HepG2 (cell line): ENCODE measurements at regions of chr11 and their contacts with region 1.

Region 1: GRCh38 chr11:31487848-31488247 is 21.6 kb downstream of the IMMP1L start:
- DNase-seq: peak; percentile 53
- ATAC-seq: peak; percentile 76
- H3K4me3 ChIP-seq: no peak overlapping the region
- H3K27ac ChIP-seq: no peak overlapping the region
- H3K4me1 ChIP-seq: no peaks in the 10 kb centered on the region
- H3K27me3 ChIP-seq: no peaks in the 10 kb centered on the region
- CTCF ChIP-seq: peak; percentile 49
- EP300 ChIP-seq: no peak
- POLR2A ChIP-seq: no peak
- RAD21 ChIP-seq: no peak

Region 2: DNA sequence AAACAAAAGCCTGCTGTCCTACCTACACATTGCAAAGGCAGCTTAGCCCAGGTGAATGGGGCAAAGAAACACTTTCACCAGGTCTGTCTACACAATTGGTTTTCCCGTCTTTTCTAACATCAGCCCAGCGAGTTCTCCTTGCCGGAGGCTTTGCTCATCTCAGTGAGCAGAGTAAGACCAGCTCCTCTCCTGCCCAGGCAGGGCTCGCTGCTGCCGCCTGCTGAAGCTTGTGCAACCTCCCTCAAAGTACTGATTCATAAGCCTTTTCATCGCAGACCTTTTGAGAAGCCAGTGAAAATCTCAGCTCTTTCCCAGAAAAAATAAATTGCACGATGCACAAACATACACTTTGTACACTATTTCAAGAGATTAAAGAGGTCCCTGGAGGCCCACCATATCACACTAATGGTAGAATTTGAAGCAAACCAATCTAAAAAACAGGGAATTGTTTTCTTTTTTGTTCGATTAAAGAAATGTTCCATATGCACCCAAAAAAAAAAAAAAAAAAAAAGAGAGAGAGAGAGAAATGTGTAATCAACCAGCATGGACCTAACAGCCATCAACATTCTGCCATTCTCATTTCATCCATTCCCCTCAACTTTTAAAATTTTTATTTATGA is 573.6 kb before region 1 on chr11:
- CTCF ChIA-PET with region 1: no interaction called
- POLR2A ChIA-PET with region 1: no interaction called
- in situ Hi-C with region 1: no loop called
- intact Hi-C with region 1: no loop called
- DNase-seq: peak; percentile 16
- ATAC-seq: peak; percentile 97
- H3K4me3 ChIP-seq: no peak overlapping the region
- H3K27ac ChIP-seq: no peak overlapping the region
- H3K4me1 ChIP-seq: no peaks in the 10 kb centered on the region
- H3K27me3 ChIP-seq: no peaks in the 10 kb centered on the region
- CTCF ChIP-seq: peak; percentile 74
- EP300 ChIP-seq: no peak
- POLR2A ChIP-seq: no peak
- RAD21 ChIP-seq: no peak

Region 3: GRCh38 chr11:31826536-31827438 is 338.9 kb after region 1 on chr11:
- CTCF ChIA-PET with region 1: no interaction called
- POLR2A ChIA-PET with region 1: no interaction called
- in situ Hi-C with region 1: loop called (anchors 10 kb)
- intact Hi-C with region 1: no loop called
- DNase-seq: no peak
- ATAC-seq: peak; percentile 41; the same call in 2 of the 3 replicates
- H3K4me3 ChIP-seq: no peak overlapping the region; a peak in 1 of 6 replicates
- H3K27ac ChIP-seq: no peak overlapping the region
- H3K4me1 ChIP-seq: 0 out of 2 replicates have a peak, but pooled peaks cover 8% of the 10 kb centered on the region
- H3K27me3 ChIP-seq: peaks cover 7 to 76% of the 10 kb centered on the region in 2 experiments
- CTCF ChIP-seq: no peak
- EP300 ChIP-seq: no peak
- POLR2A ChIP-seq: no peak
- RAD21 ChIP-seq: no peak

Region 4: DNA sequence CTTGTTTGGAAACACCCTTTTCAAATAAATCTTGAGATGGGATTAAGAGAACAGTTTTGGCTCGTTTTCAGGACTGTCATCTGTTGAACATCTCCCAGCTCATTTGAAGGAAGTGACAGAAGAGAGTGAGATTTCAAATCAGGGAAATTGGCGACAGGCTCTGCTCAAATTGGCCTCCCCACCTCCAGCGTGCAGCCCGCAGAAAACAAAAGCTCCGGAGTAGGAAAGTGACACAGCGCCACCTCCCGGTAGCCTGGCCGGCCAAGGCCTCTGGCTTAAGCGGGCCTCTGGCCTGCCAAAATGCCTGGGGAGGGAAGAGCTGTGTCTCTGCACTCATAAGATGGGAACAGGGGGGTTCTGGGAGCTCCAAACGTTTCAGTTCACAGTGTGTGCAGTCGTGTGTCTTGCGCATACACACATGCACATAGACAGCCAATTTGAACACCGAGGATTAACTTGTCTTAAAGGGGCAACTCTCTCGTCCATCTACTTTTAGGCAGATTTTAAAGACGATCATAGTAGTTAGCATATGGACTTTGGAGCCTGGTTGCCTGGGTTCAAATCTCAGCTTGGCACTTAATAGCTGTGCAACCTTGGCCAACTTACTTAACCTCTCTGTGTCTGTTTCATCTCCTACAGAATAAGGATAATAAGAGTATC is 470.4 kb after region 1 on chr11:
- CTCF ChIA-PET with region 1: no interaction called
- POLR2A ChIA-PET with region 1: no interaction called
- in situ Hi-C with region 1: no loop called
- intact Hi-C with region 1: loop called (anchors 2 kb)
- DNase-seq: peak; percentile 15
- ATAC-seq: peak; percentile 95
- H3K4me3 ChIP-seq: no peak overlapping the region
- H3K27ac ChIP-seq: no peak overlapping the region
- H3K4me1 ChIP-seq: no peaks in the 10 kb centered on the region
- H3K27me3 ChIP-seq: peaks cover 0 to 13% of the 10 kb centered on the region in 2 experiments; a peak in 1 of 5 replicates
- CTCF ChIP-seq: peak; percentile 76
- EP300 ChIP-seq: no peak
- POLR2A ChIP-seq: no peak
- RAD21 ChIP-seq: peak; percentile 62

Region 5: GRCh38 chr11:32176223-32176934 is 688.5 kb after region 1 on chr11:
- CTCF ChIA-PET with region 1: interaction called, 4 read pairs
- POLR2A ChIA-PET with region 1: no interaction called
- in situ Hi-C with region 1: no loop called
- intact Hi-C with region 1: loop called (anchors 1 kb)
- DNase-seq: peak; percentile 69
- ATAC-seq: peak; percentile 81
- H3K4me3 ChIP-seq: no peak overlapping the region
- H3K27ac ChIP-seq: no peak overlapping the region
- H3K4me1 ChIP-seq: no peaks in the 10 kb centered on the region
- H3K27me3 ChIP-seq: peaks cover 0 to 19% of the 10 kb centered on the region in 2 experiments; a peak in 4 of 5 replicates
- CTCF ChIP-seq: peak; percentile 84
- EP300 ChIP-seq: no peak
- POLR2A ChIP-seq: no peak
- RAD21 ChIP-seq: peak; percentile 70